Dorsolateral prefrontal cortex (tissue), 120 donors: ENCODE measurements at regions of chr15 and their contacts with region 1.

Region 1: GRCh38 chr15:79091204-79091867 is 756 bp upstream of the RASGRF1 start:
- DNase-seq: peak in 8 of 10 donors; percentile 36 to 79 (median 71)
- H3K4me3 ChIP-seq: peak overlapping the region; percentile 42 to 80 (median 64)
- H3K27ac ChIP-seq: peak overlapping the region in 47 of 59 donors; percentile 12 to 88 (median 69)
- H3K27me3 ChIP-seq: peaks cover 0 to 27% (median 8%) of the 10 kb centered on the region in 45 donors
- CTCF ChIP-seq: no peak

Region 2: GRCh38 chr15:79028411-79028964 is 62.8 kb before region 1 on chr15:
- intact Hi-C with region 1: loop called in 1 of 2 experiments (anchors 2 kb)
- DNase-seq: peak in 5 of 10 donors; percentile 48 to 70 (median 55)
- H3K4me3 ChIP-seq: no peak overlapping the region
- H3K27ac ChIP-seq: peak overlapping the region in 3 of 59 donors; percentile 36 to 45 (median 39)
- H3K27me3 ChIP-seq: no peaks in the 10 kb centered on the region
- CTCF ChIP-seq: peak; percentile 55 to 96 (median 86)

Region 3: DNA sequence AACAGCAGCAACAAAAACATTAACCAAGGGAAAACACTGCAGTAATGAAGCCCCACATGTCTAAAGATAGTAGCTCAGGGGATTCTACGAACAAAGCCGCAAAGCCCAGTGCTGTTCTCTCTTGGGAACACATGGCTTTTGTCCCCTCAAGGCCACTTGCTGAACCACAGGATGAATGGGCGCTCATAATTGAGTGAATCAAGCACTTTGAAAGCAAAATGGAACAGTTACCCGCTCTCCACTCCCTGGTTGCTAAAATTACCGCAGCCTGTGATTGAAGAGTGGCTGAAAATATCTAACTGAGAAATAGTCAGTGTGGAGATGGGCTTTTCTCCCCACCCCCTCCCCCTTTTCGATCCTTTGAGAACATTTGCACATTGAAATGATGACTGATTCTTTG is 40.3 kb before region 1 on chr15:
- intact Hi-C with region 1: loop called in 1 of 2 experiments (anchors 5 kb)
- DNase-seq: peak in 2 of 10 donors; percentile 43
- H3K4me3 ChIP-seq: peak overlapping the region in 4 of 59 donors; percentile 4 to 31 (median 10)
- H3K27ac ChIP-seq: peak overlapping the region in 46 of 59 donors; percentile 1 to 74 (median 45)
- H3K27me3 ChIP-seq: no peaks in the 10 kb centered on the region
- CTCF ChIP-seq: no peak

Region 4: DNA sequence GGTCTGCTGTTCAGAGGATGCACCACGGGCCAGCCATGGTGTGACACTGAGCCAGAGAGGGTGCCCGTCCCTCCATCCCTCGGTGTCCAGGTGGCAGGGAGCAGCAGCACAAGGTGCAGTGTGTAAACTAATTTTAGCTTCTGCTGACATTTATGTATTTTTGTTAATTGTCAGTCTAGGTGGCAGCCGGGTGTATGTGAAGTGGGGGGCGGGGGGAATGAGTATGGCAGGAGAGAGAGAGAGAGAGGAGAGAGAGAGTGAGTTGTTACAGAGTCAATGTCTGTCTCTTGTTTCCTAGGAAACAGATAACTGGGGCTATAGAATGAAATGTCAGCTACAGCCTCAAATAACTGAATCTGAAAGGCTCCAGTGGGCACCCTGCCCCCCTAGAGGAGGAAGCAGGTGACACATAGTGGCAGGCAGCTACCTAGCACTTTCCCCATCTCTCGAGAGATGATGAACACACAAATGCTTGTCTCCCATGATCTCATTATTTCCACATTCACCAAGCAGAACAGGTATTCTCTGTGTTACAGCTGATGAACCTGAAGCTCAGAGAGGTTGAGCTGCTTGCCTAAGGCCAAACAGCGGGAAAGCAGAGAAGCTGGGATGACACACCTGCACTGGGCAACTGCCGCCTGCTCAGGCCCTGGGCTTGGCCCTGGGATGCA is 25.5 kb before region 1 on chr15:
- intact Hi-C with region 1: loop called in 1 of 2 experiments (anchors 2 kb)
- DNase-seq: no peak
- H3K4me3 ChIP-seq: no peak overlapping the region
- H3K27ac ChIP-seq: peak overlapping the region in 46 of 59 donors; percentile 0 to 93 (median 80)
- H3K27me3 ChIP-seq: no peaks in the 10 kb centered on the region
- CTCF ChIP-seq: no peak

Region 5: GRCh38 chr15:79168922-79169456 is 77.7 kb after region 1 on chr15:
- intact Hi-C with region 1: loop called in 1 of 2 experiments (anchors 5 kb)
- DNase-seq: peak in 8 of 10 donors; percentile 50 to 76 (median 60)
- H3K4me3 ChIP-seq: no peak overlapping the region
- H3K27ac ChIP-seq: peak overlapping the region in 46 of 59 donors; percentile 1 to 75 (median 50)
- H3K27me3 ChIP-seq: no peaks in the 10 kb centered on the region
- CTCF ChIP-seq: peak in 41 of 56 donors; percentile 4 to 60 (median 31)

Region 6: DNA sequence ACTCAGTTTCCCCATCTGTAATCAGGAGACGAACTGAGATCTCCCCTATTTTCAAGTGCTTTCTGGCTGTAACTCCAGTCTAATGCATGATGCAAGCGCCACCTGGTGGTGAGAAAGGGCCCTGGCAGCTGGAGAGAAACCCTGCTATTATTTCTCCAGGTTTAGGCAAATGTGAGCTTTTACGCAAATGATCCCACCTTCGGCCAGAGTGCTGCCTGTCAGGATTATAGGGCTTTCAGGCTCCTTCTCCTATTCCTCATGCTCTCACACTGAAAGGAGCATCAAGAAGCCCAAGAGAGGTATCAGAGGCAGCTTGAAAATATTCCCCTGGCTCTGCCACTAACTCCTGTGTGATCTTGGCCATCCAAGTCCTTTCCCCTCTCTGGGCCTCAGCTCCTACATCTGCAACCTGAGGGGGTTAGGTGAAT is 93.1 kb after region 1 on chr15:
- intact Hi-C with region 1: loop called in 1 of 2 experiments (anchors 5 kb)
- DNase-seq: peak; percentile 70 to 91 (median 82)
- H3K4me3 ChIP-seq: no peak overlapping the region
- H3K27ac ChIP-seq: no peak overlapping the region
- H3K27me3 ChIP-seq: no peaks in the 10 kb centered on the region
- CTCF ChIP-seq: peak; percentile 88 to 100 (median 99)